Activated CD4-positive, alpha-beta memory T cell treated with anti-CD3 and anti-CD28 coated beads, Interleukin-2, amount 10 ng/mL, durations not matched to agents 7 days and 5 days (primary cell): ENCODE measurements at regions of chr14 and their contacts with region 1.

Region 1: GRCh38 chr14:76962303-76962660 is 66.2 kb downstream of the IRF2BPL start:
- DNase-seq: no peak
- H3K4me3 Mint-ChIP-seq: peak overlapping the region; percentile 57
- H3K27ac Mint-ChIP-seq: peak overlapping the region; percentile 92
- H3K4me1 Mint-ChIP-seq: peaks cover 77% of the 10 kb centered on the region
- H3K27me3 Mint-ChIP-seq: peaks cover 47% of the 10 kb centered on the region

Region 2: DNA sequence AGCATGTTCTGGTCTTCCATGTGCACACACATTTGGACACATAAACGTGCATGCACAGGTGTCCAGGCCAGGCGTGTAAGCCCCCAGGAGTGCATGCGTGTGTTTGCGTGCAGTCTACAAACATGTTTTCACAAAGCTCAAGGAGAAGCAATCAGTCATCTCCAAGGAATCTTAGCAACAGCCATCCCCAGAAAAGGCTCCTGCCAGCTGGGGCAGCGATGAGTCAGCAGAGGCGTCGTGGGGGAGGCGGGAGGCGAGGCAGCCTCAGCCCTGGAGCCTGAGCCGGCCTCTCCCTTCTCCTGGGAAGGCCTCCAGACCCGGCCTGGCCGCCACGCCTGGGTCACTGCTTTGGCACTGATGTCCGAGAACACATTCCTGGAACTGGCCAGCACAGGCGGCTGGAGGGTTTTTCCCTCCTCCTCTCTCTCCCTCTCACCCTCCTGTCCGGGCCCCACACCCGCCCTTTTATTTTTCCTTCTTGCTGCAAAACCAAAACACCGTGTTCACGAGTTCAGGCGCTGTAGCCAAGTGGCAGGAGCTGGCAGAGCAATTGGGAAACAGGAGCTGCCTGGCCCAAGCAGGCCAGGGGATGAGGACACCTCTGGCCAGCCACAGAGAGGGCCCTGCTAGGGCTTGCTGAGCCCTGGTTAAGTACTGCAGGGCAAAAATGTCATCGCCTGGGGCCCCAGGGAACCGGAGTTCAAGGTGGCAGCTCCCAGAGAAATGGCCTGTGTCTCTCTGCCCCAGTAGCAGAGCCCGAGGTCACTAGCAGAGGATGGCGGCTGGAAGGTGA is 43.3 kb before region 1 on chr14:
- CTCF ChIA-PET with region 1: interaction called, 14 read pairs
- POLR2A ChIA-PET with region 1: interaction called, 11 read pairs
- DNase-seq: no peak
- H3K4me3 Mint-ChIP-seq: no peak overlapping the region
- H3K27ac Mint-ChIP-seq: no peak overlapping the region
- H3K4me1 Mint-ChIP-seq: peaks cover 53% of the 10 kb centered on the region
- H3K27me3 Mint-ChIP-seq: peaks cover 5% of the 10 kb centered on the region

Region 3: GRCh38 chr14:76947078-76947837 is 15.0 kb before region 1 on chr14:
- CTCF ChIA-PET with region 1: interaction called, 13 read pairs
- POLR2A ChIA-PET with region 1: interaction called, 26 read pairs
- DNase-seq: peak; percentile 82
- H3K4me3 Mint-ChIP-seq: no peak overlapping the region
- H3K27ac Mint-ChIP-seq: peak overlapping the region; percentile 54
- H3K4me1 Mint-ChIP-seq: peaks cover 53% of the 10 kb centered on the region
- H3K27me3 Mint-ChIP-seq: no peaks in the 10 kb centered on the region

Region 4: GRCh38 chr14:76986231-76986565 is 23.9 kb after region 1 on chr14:
- CTCF ChIA-PET with region 1: interaction called, 10 read pairs
- POLR2A ChIA-PET with region 1: interaction called, 9 read pairs
- DNase-seq: no peak
- H3K4me3 Mint-ChIP-seq: no peak overlapping the region
- H3K27ac Mint-ChIP-seq: no peak overlapping the region
- H3K4me1 Mint-ChIP-seq: peaks cover 19% of the 10 kb centered on the region
- H3K27me3 Mint-ChIP-seq: peaks cover 17% of the 10 kb centered on the region

Region 5: DNA sequence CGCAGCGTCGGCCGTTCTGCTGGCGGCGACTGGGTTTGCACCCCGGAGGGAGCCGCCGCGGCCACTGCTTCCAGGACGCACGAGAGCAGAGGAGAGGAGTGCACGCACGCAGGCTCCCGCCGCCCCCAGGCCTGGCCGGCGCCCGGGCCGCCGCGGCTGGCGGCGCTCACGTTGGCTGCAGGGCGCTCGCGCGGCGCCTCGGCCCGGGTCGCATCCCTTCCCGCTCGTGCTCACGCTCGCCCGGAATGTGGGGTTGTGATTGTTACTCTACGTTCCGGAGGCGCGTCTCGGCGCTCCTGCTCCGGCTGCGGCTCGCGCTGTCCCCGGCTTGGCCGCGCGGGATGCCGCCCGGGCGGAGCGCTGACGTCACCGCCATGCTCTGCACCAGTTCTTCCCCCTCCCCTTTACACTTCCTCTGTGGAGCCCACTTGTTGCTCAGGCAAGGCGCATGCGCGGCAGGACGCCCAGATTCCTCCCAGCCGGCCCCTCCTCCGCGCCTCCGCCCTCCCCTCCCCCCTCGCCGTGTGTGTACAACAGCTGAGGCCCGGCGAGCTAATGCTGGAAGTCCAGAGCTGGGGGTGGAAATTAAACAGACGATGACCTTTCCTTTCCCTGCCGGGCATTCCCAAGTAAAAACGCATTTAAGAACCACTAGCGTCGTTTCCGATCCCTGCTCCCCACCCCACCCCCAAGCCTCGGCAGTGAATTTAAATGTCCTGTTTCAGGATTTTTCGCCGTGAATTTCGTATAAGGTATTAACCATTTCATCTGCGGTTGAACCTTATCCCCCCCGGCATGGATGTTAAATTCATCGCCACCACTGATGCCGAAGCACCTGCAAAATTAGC is 66.3 kb after region 1 on chr14 and contains the start of gene IRF2BPL:
- CTCF ChIA-PET with region 1: interaction called, 15 read pairs
- POLR2A ChIA-PET with region 1: interaction called, 130 read pairs
- DNase-seq: peak; percentile 95
- H3K4me3 Mint-ChIP-seq: peak within 1 kb of the TSS; percentile 88
- H3K27ac Mint-ChIP-seq: peak within 1 kb of the TSS; percentile 89
- H3K4me1 Mint-ChIP-seq: peaks cover 58% of the 10 kb centered on the region
- H3K27me3 Mint-ChIP-seq: no peaks in the 10 kb centered on the region
- total RNA-seq, gene IRF2BPL: 39.0 to 39.3 TPM

Region 6: GRCh38 chr14:77040059-77040740 is 77.9 kb after region 1 on chr14:
- CTCF ChIA-PET with region 1: interaction called, 6 read pairs
- POLR2A ChIA-PET with region 1: interaction called, 34 read pairs
- DNase-seq: peak; percentile 92
- H3K4me3 Mint-ChIP-seq: peak overlapping the region; percentile 63
- H3K27ac Mint-ChIP-seq: peak overlapping the region; percentile 100
- H3K4me1 Mint-ChIP-seq: peaks cover 87% of the 10 kb centered on the region
- H3K27me3 Mint-ChIP-seq: no peaks in the 10 kb centered on the region